Left lung (tissue), 14 donors: ENCODE measurements at regions of chr3 and their contacts with region 1.

Region 1: GRCh38 chr3:133377396-133377795 is 22.5 kb upstream of the BFSP2 start:
- DNase-seq: peak in 2 of 4 donors; percentile 35 to 62
- ATAC-seq: peak; percentile 73
- H3K4me3 ChIP-seq: no peak overlapping the region
- H3K27ac ChIP-seq: no peak overlapping the region
- H3K4me1 ChIP-seq: peaks cover 0 to 8% of the 10 kb centered on the region in 2 donors
- H3K27me3 ChIP-seq: no peaks in the 10 kb centered on the region
- CTCF ChIP-seq: peak in 1 of 2 donors; percentile 44

Region 2: DNA sequence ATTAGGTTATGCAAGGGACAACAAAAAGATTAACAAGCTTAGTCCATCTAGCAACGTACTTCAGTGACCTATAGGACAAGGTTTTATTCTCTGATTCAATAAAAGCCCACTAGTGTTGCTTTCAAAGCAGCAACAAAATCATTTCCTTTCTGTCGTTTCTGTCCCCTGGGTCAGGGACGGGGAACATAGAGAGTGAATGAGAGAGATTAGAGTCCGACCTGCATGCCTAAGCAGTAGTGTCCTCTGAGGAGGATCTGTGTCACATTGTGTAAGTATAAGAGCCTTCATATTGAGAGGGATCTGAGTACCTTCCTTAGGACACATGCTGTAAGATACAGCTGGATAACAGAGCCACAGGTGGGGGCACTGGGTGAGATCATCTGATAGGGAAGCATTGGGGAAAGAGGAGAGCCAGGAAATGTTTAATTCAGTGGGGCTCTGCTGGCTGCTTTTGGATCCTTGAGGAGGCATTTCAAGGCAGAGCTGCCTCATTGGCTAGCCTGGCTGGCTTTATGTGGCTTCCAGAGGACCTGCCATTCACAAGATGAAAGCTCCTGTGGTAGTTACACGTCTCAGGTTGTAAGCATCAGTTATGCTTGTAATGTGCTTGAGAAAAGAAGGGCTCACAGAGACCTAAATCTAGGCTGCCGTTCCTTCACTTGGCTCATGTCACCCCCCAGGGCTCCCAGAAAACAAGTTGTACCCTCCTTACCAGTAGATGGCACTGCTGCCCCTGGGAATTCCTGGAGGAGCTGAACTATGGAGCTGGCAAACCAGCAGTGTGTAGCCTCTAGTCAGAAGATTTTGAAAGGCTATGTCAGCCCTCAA is 336.5 kb before region 1 on chr3:
- intact Hi-C with region 1: loop called in 1 of 2 experiments (anchors 5 kb)
- DNase-seq: peak in 3 of 4 donors; percentile 71 to 92 (median 85)
- ATAC-seq: peak; percentile 75
- H3K4me3 ChIP-seq: no peak overlapping the region
- H3K27ac ChIP-seq: peak overlapping the region; percentile 1 to 42
- H3K4me1 ChIP-seq: peaks cover 0 to 22% of the 10 kb centered on the region in 2 donors
- H3K27me3 ChIP-seq: peaks cover 0 to 43% of the 10 kb centered on the region in 2 donors
- CTCF ChIP-seq: peak; percentile 68 to 69

Region 3: GRCh38 chr3:133448478-133449122 is 71.2 kb after region 1 on chr3:
- intact Hi-C with region 1: no loop called
- DNase-seq: no peak
- ATAC-seq: peak; percentile 69
- H3K4me3 ChIP-seq: no peak overlapping the region
- H3K27ac ChIP-seq: no peak overlapping the region
- H3K4me1 ChIP-seq: no peaks in the 10 kb centered on the region
- H3K27me3 ChIP-seq: no peaks in the 10 kb centered on the region
- CTCF ChIP-seq: no peak